Activated CD4-positive, alpha-beta T cell treated with anti-CD3 and anti-CD28 coated beads for 36 hours (primary cell): ENCODE measurements at regions of chr1 and their contacts with region 1.

Region 1: GRCh38 chr1:207499573-207499972 is 3.6 kb downstream of the CR1 start:
- DNase-seq: peak; percentile 85
- ATAC-seq: peak; percentile 70
- H3K4me3 Mint-ChIP-seq: no peak overlapping the region
- H3K27ac Mint-ChIP-seq: peak overlapping the region; percentile 30
- H3K4me1 Mint-ChIP-seq: peaks cover 24% of the 10 kb centered on the region
- H3K27me3 Mint-ChIP-seq: peaks cover 32% of the 10 kb centered on the region

Region 2: DNA sequence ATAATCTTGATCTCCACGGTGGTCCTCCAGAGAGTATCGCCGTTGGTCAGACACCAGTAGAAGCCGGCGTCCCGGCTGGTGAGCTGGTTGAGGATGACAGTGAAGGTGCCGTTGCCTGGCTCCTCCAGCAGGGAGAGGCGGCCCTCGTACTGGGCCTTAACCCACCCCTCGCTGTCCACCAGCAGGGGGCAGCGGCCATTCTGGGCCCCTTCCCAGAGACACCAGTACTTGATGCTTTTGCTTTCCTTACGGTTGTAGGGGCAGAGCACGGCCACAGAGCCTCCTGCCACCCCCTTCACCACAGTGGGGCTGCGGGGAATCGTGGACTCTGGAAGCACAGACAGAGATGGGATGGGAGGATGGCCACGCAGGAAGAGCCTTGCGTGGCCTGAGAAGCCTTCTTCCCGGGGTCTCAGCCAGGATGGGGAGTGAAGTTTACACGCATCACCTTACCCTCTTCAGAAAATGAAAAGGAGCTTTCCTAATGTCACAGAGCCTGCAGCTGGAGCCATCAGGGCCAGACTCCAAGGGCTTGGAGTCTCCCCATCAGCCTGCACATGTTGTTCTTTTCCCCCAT is 564.0 kb before region 1 on chr1:
- CTCF ChIA-PET with region 1: interaction called, 3 read pairs
- POLR2A ChIA-PET with region 1: no interaction called
- intact Hi-C with region 1: loop called in 1 of 2 experiments (anchors 5 kb)
- DNase-seq: peak; percentile 79
- ATAC-seq: peak; percentile 76
- H3K4me3 Mint-ChIP-seq: no peak overlapping the region
- H3K27ac Mint-ChIP-seq: no peak overlapping the region
- H3K4me1 Mint-ChIP-seq: peaks cover 23% of the 10 kb centered on the region
- H3K27me3 Mint-ChIP-seq: no peaks in the 10 kb centered on the region

Region 3: DNA sequence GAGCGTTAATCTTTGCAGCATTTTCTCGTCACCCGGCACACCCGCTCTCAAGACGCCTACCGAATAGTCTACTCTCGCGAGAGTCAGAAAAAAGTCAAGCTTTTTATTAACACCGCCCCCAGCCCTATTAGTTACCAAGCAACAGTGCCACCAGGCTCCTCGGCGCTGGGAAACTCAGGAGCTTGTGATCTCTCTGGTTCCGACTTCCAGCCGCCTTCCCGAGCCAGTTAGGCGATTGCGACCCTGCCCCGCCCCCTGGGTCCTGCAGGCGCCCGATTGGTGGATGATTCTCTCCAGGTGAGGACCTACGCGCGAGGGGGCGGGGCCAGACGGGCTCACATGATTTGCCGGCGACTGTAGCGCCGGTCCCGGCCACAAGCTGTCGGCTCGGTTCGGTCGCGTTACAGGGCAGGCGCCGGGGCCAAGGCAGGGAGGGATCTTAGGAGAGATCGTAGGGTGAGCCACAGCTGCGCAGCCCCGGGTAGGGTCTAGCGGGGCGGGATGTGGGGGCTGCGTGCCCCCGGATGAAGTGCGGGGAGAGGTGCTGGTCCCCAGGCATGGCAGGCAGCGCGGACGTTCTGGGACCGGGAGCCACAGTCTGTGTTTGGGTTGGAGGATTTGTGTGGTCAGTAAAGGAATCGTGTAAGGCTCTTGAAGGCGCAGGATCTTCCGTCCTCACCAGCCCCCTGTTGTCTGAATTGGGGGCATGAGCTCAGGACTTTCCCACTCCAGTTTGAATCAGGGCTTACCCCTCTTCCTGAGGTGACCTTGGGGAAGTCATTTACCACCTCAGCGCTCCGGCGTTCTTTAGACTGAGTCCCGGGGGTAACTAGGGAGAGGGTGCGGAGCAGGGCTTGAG is 446.4 kb before region 1 on chr1 and contains the start of gene PFKFB2:
- CTCF ChIA-PET with region 1: interaction called, 6 read pairs
- POLR2A ChIA-PET with region 1: no interaction called
- intact Hi-C with region 1: loop called (anchors 1 kb)
- DNase-seq: peak; percentile 96
- ATAC-seq: peak; percentile 83
- H3K4me3 Mint-ChIP-seq: peak within 1 kb of the TSS; percentile 99
- H3K27ac Mint-ChIP-seq: peak within 1 kb of the TSS; percentile 89
- H3K4me1 Mint-ChIP-seq: peaks cover 39% of the 10 kb centered on the region
- H3K27me3 Mint-ChIP-seq: no peaks in the 10 kb centered on the region
- total RNA-seq, gene PFKFB2: 3.1 to 3.5 TPM

Region 4: DNA sequence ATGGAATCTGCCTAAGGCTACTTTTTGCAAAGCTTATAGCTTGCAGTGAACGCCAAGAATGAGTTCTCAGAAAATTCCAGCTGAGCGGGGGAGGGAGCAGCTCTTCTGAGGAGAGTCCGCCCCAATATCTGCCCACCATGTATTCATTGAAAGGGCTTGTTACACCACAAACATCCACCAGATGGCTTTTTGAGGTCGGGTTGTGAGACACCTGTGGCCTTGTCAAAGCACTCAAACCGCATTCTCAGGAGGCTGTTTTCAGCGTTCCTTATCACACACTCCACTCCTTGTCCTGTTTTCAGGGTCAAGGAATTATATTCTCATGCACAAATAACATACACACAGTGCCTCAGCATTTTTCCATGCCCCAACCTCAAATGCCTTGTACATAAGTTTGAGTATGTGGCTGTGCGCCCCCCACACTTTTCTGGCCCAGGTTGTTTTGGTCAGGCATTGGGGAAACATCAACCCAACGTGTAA is 414.8 kb before region 1 on chr1:
- CTCF ChIA-PET with region 1: interaction called, 22 read pairs
- POLR2A ChIA-PET with region 1: no interaction called
- intact Hi-C with region 1: loop called (anchors 1 kb)
- DNase-seq: peak; percentile 70
- ATAC-seq: peak; percentile 77
- H3K4me3 Mint-ChIP-seq: no peak overlapping the region
- H3K27ac Mint-ChIP-seq: no peak overlapping the region
- H3K4me1 Mint-ChIP-seq: peaks cover 20% of the 10 kb centered on the region
- H3K27me3 Mint-ChIP-seq: peaks cover 7% of the 10 kb centered on the region

Region 5: GRCh38 chr1:207321079-207321789 is 178.3 kb before region 1 on chr1 and contains the start of gene CD55:
- CTCF ChIA-PET with region 1: interaction called, 4 read pairs
- POLR2A ChIA-PET with region 1: interaction called, 9 read pairs
- intact Hi-C with region 1: loop called (anchors 1 kb)
- DNase-seq: peak; percentile 99
- ATAC-seq: peak; percentile 93
- H3K4me3 Mint-ChIP-seq: peak within 1 kb of the TSS; percentile 95
- H3K27ac Mint-ChIP-seq: peak within 1 kb of the TSS; percentile 100
- H3K4me1 Mint-ChIP-seq: peaks cover 31% of the 10 kb centered on the region
- H3K27me3 Mint-ChIP-seq: no peaks in the 10 kb centered on the region
- total RNA-seq, gene CD55: 56.8 to 92.7 TPM

Region 6: GRCh38 chr1:207389740-207390464 is 109.7 kb before region 1 on chr1:
- CTCF ChIA-PET with region 1: interaction called, 4 read pairs
- POLR2A ChIA-PET with region 1: no interaction called
- intact Hi-C with region 1: loop called in 1 of 2 experiments (anchors 1 kb)
- DNase-seq: peak; percentile 29
- ATAC-seq: peak; percentile 98
- H3K4me3 Mint-ChIP-seq: no peak overlapping the region
- H3K27ac Mint-ChIP-seq: peak overlapping the region; percentile 83
- H3K4me1 Mint-ChIP-seq: peaks cover 19% of the 10 kb centered on the region
- H3K27me3 Mint-ChIP-seq: no peaks in the 10 kb centered on the region

Region 7: DNA sequence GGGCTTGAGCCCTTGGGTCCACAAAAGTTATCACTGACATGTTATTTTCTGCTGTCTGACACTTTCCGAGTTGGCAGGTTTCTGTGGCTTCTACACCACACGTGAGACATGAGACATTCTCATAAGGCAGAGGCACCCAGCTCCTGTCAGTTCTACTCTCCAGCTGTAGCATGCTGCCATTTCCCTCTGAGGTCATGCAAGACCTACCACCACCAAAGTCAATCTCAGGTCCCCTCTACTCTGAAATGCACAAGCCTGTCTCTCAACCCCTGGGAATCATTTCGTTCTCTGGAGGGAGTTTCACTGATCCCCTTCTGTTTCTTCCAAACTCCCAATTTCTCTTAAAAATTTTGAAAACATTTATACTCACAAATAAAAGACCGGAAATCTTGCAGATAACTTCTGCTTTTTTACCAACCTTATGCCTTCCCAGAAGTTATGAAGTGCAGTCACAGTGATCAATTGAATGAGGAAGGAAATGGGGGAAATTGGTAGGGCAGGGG is 84.9 kb before region 1 on chr1:
- CTCF ChIA-PET with region 1: interaction called, 3 read pairs
- POLR2A ChIA-PET with region 1: no interaction called
- intact Hi-C with region 1: loop called (anchors 1 to 2 kb)
- DNase-seq: peak; percentile 75
- ATAC-seq: peak; percentile 74
- H3K4me3 Mint-ChIP-seq: no peak overlapping the region
- H3K27ac Mint-ChIP-seq: peak overlapping the region; percentile 10
- H3K4me1 Mint-ChIP-seq: peaks cover 37% of the 10 kb centered on the region
- H3K27me3 Mint-ChIP-seq: peaks cover 4% of the 10 kb centered on the region